Activated CD4-positive, alpha-beta memory T cell treated with anti-CD3 and anti-CD28 coated beads, Interleukin-2, amount 10 ng/mL, durations not matched to agents 7 days and 5 days (primary cell): ENCODE measurements at regions of chr15 and their contacts with region 1.

Region 1: DNA sequence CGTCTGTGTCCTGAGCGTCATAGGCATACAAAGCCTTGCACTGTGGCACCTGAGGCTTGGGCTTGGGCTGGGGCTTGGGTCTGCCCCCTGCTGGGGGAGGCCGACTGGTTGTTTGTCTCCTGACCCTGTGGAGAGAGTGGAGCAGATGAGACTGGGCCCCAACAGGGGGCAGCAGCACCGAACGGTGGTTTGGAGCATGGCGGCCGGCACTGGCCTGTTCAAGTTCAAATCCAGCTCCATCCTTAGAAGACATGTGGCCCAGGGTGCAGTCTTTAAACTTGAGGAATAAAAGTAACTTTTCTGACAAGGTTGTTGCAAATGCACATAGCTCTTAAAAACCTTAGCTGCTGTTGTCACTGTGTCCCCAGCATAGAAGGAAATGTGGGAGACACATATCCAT is 33.3 kb downstream of the CCNB2 start:
- DNase-seq: peak; percentile 72
- H3K4me3 Mint-ChIP-seq: no peak overlapping the region
- H3K27ac Mint-ChIP-seq: no peak overlapping the region
- H3K4me1 Mint-ChIP-seq: peaks cover 45% of the 10 kb centered on the region
- H3K27me3 Mint-ChIP-seq: no peaks in the 10 kb centered on the region

Region 2: DNA sequence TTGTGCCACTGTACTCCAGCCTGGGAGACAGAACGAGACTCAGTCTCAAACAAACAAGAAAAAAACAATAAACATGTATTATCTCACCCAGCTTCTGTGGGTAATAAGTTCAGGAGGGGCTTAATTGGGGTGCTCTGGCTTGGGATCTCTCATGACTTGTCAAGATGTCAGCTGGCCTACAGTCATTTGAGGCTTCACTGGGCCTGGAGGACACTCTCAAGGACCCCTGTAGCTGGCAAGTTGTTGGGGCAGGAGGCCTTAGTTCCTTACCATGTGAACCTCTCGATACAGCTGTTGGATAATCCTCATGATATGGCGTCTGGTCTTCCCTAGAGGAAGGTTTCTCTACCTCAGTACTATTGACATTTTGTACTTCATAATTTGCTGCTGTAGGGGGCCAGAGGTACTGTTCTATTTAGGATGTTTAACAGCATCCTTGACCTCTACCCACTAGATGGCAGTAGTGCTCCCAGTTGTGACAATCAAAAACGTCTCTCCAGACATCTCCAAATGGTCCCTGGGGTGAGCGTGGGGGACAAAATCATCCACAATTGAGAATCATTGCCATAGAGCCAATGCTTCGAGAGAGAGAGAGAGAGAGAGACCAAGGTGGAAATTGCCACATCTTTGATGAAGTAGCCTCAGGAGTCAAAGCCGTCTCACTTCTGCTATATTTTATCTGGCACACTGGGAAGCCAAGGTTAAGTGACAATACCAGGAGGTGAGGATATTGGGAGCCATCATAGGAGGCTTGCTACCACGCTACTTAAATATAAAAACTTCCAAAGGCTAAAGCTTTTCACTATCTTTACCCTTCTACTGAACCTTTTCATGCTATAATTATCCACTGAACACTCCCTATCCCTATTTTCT is 180.9 kb before region 1 on chr15:
- CTCF ChIA-PET with region 1: interaction called, 14 read pairs
- POLR2A ChIA-PET with region 1: no interaction called
- DNase-seq: peak; percentile 65
- H3K4me3 Mint-ChIP-seq: no peak overlapping the region
- H3K27ac Mint-ChIP-seq: no peak overlapping the region
- H3K4me1 Mint-ChIP-seq: peaks cover 15% of the 10 kb centered on the region
- H3K27me3 Mint-ChIP-seq: peaks cover 1% of the 10 kb centered on the region

Region 3: GRCh38 chr15:58980351-58980939 is 157.8 kb before region 1 on chr15:
- CTCF ChIA-PET with region 1: interaction called, 27 read pairs
- POLR2A ChIA-PET with region 1: interaction called, 7 read pairs
- DNase-seq: no peak
- H3K4me3 Mint-ChIP-seq: no peak overlapping the region
- H3K27ac Mint-ChIP-seq: peak overlapping the region; percentile 8
- H3K4me1 Mint-ChIP-seq: peaks cover 46% of the 10 kb centered on the region
- H3K27me3 Mint-ChIP-seq: peaks cover 9% of the 10 kb centered on the region